ENCODE measurements at regions of chr4 and their contacts with region 1.

Region 1: DNA sequence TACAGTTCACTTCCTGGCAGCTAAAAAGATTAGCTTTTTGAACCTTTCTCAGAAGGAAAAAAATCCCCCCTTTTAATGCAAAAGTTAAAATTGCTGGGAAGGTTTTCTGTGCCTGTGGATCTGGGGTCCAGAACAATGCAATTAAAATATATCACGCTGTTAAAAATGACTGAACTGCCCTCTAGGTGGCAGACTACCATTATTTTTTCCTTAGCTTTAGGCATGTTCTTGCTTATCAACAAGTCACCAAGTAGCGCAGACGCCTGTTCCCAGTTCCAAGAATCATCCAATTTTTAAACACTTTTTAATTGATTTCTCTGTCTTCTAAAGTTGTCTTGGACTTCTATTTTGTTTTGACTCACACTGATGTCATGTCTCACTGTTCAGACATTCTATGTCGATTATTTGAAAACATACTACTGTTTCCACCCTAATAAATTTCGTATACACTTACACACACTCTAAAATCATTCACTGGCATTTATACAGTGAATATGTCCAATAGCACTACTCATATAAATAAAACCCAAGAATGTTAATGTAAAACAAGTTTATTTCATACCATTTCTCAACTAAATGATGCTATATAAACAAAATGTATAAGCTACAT is 661.6 kb downstream of the RAPGEF2 start:
- DNase-seq: peak; percentile 60
- H3K4me3 ChIP-seq: no peak overlapping the region
- H3K27ac ChIP-seq: no peak overlapping the region
- H3K4me1 ChIP-seq: no peaks in the 10 kb centered on the region
- H3K27me3 ChIP-seq: no peaks in the 10 kb centered on the region
- CTCF ChIP-seq: peak; percentile 53 to 59

Region 2: DNA sequence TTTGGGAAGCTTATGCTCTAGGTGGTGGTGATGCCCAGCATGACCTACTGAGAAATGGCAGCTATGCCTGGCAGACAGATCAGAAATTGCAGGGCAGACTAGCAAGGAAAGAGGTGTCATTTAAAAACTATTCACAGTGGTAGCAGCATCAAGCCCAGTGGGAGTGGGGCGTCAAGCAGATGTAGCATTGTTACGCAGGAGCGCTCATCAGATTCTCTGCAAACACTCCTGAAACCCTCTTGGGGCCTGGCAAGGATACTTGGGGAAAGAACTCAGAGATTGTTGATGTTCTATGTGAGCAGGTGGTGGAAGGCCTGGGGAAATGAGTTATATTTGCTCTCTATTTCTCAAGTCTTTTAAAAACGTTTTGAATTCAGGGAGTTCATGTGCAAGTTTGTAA is 223.9 kb before region 1 on chr4:
- CTCF ChIA-PET with region 1: interaction called, 31 read pairs
- dilution Hi-C with region 1: no loop called
- in situ Hi-C with region 1: no loop called
- intact Hi-C with region 1: no loop called
- DNase-seq: no peak
- H3K4me3 ChIP-seq: no peak overlapping the region
- H3K27ac ChIP-seq: no peak overlapping the region
- H3K4me1 ChIP-seq: no peaks in the 10 kb centered on the region
- H3K27me3 ChIP-seq: peaks cover 7% of the 10 kb centered on the region
- CTCF ChIP-seq: no peak

Region 3: DNA sequence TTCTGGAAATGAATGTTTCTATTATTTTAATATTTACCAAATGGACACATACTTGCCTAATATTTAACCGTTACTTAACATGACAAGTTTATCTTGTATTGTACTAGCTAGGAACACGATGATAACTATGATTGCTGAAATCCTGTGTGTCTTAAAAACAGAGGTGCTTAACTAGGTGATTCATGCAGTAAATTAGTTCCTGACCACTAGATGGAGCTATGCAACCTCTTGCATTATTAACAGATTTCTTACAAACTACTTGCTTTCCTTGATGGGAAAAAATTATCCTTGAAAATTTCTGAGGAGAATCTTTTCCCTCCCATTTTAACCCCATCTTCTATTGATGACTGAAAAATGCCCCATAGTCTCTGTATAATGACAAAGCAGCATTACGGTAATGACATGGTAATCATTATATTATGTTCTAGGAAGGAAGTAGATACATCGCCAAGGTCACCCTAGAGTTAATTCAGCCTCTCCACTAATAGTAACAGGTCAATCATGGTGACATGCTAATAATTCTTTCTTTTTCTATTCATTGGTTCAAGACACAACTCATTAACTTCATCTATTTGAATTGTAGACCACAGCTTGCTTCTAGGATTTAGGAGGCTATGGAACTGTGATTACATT is 182.7 kb after region 1 on chr4:
- CTCF ChIA-PET with region 1: no interaction called
- dilution Hi-C with region 1: no loop called
- in situ Hi-C with region 1: no loop called
- intact Hi-C with region 1: loop called (anchors 1 kb)
- DNase-seq: peak; percentile 62
- H3K4me3 ChIP-seq: no peak overlapping the region
- H3K27ac ChIP-seq: no peak overlapping the region
- H3K4me1 ChIP-seq: no peaks in the 10 kb centered on the region
- H3K27me3 ChIP-seq: no peaks in the 10 kb centered on the region
- CTCF ChIP-seq: peak; percentile 75 to 79